ENCODE measurements at regions of chr9 and their contacts with region 1.

Region 1: DNA sequence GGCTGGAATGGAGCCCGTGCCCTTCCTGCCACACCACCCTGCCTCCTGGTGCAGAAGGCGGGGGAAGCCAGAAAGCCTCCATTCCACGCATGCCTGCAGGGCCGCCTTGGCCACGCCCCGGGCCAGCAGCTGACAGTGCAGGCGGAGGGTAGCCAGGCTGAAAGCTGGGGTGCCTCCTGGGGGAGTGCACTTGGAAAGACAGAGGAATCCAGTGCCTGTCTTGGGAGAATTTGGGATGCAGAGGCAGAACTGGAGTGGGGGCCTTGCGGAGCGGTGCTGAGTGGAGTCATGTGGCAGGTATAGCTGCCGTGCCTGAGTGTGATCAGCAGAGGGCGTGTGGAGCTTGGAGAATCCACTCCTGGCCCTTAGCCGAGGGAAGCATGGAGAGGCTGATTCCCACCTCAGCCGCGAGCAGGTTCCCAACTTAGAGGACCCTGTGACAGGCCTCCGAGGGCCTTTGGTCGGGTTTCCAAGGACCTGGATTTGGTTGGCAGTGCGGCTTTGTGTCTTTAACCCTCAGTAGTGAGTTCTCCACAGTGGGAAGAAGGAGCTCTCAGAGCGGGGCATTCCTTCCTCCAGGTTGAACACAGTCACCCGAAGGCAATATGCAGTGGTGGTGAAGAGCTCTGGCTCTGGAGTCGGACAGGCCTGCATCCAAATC is 9.1 kb upstream of the URM1 start:
- DNase-seq: peak; percentile 68 to 77 (median 73)
- H3K4me3 ChIP-seq: peak overlapping the region; percentile 29 to 83 (median 78)
- H3K27ac ChIP-seq: peak overlapping the region in 1 of 2 experiments; percentile 14
- H3K4me1 ChIP-seq: peaks cover 0 to 25% (median 19%) of the 10 kb centered on the region in 4 experiments
- H3K27me3 ChIP-seq: no peaks in the 10 kb centered on the region

Region 2: GRCh38 chr9:128159784-128160602 is 202.1 kb before region 1 on chr9 and contains the start of gene BBLN:
- CTCF ChIA-PET with region 1: no interaction called
- POLR2A ChIA-PET with region 1: no interaction called
- DNase-seq: peak; percentile 84 to 89 (median 89)
- H3K4me3 ChIP-seq: peak within 1 kb of the TSS; percentile 77 to 96 (median 85)
- H3K27ac ChIP-seq: peak within 1 kb of the TSS; percentile 50 to 87
- H3K4me1 ChIP-seq: peaks cover 6 to 19% (median 19%) of the 10 kb centered on the region in 4 experiments
- H3K27me3 ChIP-seq: no peaks in the 10 kb centered on the region

Region 3: DNA sequence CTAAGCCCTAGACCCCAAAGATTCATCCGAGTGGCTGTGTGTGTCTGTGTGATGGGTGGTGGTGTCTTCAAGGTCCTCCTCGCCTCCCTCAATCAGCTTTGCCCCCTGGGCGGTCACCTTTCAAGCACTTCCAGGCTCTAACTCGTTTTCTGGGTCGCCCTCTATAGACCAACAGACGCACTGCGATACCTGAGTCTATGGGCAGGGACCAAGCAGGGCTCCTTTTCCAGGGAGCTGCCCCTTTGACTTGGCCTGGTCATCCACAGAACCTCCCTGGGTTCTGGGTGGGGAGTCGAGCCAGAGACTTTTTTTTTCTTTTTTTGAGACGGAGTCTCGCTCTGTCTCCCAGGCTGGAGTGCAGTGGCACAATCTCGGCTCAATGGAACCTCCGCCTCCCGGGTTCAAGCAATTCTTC is 20.7 kb before region 1 on chr9:
- CTCF ChIA-PET with region 1: interaction called, 14 read pairs
- POLR2A ChIA-PET with region 1: interaction called, 5 read pairs
- DNase-seq: peak; percentile 58 to 70 (median 69)
- H3K4me3 ChIP-seq: peak overlapping the region in 5 of 7 experiments; percentile 63 to 86 (median 80)
- H3K27ac ChIP-seq: no peak overlapping the region
- H3K4me1 ChIP-seq: peaks cover 3 to 12% (median 11%) of the 10 kb centered on the region in 4 experiments
- H3K27me3 ChIP-seq: no peaks in the 10 kb centered on the region

Region 4: DNA sequence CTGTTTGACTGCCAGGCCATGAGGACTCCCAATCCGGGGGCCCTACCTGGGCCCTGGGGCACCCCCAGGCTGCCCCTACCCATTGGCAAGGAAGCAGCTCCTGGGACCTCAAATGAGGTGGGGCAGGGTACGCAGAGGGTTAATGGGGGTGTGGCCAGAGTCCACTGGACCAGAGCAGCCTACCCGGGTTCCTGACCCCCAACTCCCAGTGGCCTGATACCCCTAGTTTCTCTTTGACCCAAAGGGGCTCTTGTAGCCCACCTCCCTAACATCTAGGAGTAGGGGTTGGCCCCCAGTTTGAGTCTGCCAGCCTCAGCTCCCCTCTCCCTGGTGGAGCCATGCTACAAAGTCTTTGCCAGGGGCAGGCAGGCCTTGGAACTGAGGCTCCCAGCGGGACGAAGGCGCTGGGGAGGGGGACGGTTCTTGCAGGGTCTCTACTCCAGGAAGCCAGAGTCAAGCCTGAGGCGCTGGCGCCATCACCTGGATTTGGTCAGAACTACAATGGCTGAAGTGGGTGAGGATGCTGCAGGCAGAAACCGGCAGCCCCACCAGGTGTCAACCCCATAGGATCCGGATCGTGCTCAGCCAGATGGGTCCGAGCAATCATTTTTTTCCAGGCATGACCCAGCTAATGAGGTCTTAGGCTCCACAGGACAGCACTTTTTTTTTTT is 50.1 kb after region 1 on chr9:
- CTCF ChIA-PET with region 1: interaction called, 80 read pairs
- POLR2A ChIA-PET with region 1: interaction called, 3 read pairs
- DNase-seq: peak; percentile 60 to 77 (median 74)
- H3K4me3 ChIP-seq: no peak overlapping the region
- H3K27ac ChIP-seq: no peak overlapping the region
- H3K4me1 ChIP-seq: peaks cover 0 to 8% (median 0%) of the 10 kb centered on the region in 4 experiments
- H3K27me3 ChIP-seq: peaks cover 7 to 65% (median 18%) of the 10 kb centered on the region in 5 experiments

Region 5: DNA sequence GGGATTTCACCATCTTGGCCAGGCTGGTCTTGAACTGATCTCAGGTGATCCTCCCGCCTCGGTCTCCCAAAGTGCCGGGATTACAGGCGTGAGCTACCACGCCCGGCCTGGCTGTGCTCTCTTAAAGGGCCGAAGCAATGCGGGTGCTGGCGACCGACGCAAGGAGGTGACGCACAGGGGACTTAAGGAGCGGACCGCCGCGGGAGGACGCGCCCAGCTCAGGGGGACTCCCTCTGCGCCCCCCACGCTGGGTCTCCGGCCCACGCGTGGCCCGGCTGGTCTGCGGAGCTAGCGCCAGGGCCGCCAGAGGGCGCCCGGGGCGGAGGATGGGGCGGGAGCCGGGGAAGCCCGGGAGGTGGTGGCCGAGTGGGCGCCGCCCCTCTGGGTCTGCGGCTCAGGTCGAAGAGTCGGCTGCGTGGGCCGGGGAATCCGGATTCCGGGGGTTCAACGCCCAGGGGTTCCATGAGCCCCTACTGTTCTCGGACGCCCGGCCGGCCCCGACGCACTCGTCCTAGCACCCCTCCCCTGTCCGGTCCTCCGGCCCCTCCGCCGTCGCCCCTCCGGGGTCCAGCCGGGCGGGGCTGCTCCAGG is 58.0 kb after region 1 on chr9:
- CTCF ChIA-PET with region 1: interaction called, 80 read pairs
- POLR2A ChIA-PET with region 1: no interaction called
- DNase-seq: peak; percentile 64 to 74 (median 71)
- H3K4me3 ChIP-seq: peak overlapping the region; percentile 65 to 88 (median 81)
- H3K27ac ChIP-seq: no peak overlapping the region
- H3K4me1 ChIP-seq: peaks cover 0 to 29% (median 22%) of the 10 kb centered on the region in 4 experiments
- H3K27me3 ChIP-seq: peaks cover 0 to 26% (median 7%) of the 10 kb centered on the region in 5 experiments

Region 6: DNA sequence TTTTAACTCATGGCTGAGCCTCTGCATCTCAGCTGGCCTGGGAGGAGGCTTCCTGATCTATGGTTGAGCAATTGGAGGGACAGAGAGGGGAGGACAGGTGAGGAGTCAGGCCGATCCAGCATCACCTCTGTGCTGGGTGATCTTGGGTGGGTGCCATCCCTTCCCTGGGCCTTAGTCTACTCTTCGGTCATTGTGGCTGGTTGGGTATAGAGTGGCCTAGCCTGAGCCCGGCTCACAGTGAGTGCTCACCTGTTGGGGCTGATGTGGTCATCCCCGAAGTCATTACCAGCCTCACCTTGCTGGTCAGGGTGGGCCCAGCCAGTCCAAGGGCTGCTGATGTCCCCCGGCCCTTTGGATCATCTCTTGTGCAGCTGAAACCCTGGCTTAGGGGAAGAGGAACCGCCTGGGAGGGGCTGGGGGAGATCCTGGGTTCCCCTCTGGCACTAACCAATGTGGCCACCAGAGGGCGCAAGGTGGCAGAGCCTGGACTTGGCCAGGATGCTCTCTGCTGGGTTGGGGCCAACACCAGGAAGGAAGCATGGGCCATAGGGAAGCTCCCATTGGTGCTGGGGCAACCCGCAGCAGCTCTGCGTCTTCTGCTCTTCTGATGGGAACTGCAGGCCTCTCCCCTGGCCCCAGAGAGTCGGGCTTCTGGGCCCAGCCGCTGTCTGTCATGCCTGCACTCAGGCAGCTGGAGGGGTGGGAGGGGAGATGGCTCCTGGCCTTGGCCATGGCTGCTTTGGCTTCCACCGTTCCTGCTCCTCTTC is 76.4 kb after region 1 on chr9:
- CTCF ChIA-PET with region 1: interaction called, 11 read pairs
- POLR2A ChIA-PET with region 1: no interaction called
- DNase-seq: peak; percentile 77 to 88 (median 82)
- H3K4me3 ChIP-seq: peak overlapping the region in 1 of 7 experiments; percentile 32
- H3K27ac ChIP-seq: no peak overlapping the region
- H3K4me1 ChIP-seq: peaks cover 0 to 9% (median 8%) of the 10 kb centered on the region in 4 experiments
- H3K27me3 ChIP-seq: no peaks in the 10 kb centered on the region

Region 7: DNA sequence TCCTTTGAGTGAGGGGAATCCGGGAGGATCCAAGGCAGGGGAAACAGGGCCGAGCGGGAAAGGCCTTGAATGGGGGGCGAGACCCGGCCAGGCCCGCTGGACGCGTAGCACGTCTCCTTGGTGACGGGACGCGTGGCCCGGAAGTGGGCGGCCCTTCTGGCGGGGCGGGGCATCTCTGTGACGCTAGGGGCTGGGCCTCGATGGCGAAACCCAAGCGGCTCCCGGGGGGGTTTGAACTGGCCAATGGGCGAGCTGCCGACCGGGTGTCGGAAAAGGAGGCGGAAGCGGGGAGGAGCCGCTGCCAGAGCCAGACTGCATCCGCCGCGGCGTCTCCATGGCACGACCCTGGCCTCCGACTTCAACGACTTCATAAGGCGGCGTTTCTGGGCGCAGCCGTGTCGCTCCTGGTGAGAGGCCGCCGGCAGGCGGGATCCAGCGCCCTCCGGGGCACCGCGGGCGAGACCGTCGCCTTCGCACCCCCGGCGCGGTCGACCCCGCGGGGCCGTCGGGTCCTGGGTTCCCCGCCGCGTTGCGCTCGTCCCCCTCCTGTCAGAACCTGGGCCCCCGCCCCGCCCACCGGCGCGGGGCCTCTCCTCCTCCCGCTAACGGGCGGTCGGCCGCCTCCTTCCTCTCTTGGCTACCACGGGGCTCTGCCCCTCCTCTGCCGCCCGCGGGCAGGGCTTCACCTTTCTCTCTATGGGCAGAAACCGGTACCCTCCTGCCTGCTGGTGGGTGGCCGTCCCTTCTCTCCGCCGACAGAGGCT is 93.9 kb after region 1 on chr9 and contains the start of gene ODF2:
- CTCF ChIA-PET with region 1: no interaction called
- POLR2A ChIA-PET with region 1: no interaction called
- DNase-seq: peak; percentile 96 to 98 (median 98)
- H3K4me3 ChIP-seq: peak within 1 kb of the TSS; percentile 65 to 90 (median 82)
- H3K27ac ChIP-seq: peak within 1 kb of the TSS; percentile 79 to 90
- H3K4me1 ChIP-seq: peaks cover 0 to 17% (median 15%) of the 10 kb centered on the region in 4 experiments
- H3K27me3 ChIP-seq: no peaks in the 10 kb centered on the region

Measured in common myeloid progenitor, CD34-positive (primary cell).